ENCODE measurements at regions of chr3 and their contacts with region 1.

Region 1: GRCh38 chr3:11445883-11446282 is 173.7 kb downstream of the ATG7 start:
- DNase-seq: no peak
- H3K4me3 ChIP-seq: no peak overlapping the region
- H3K27ac ChIP-seq: no peak overlapping the region
- H3K4me1 ChIP-seq: no peaks in the 10 kb centered on the region
- H3K27me3 ChIP-seq: no peaks in the 10 kb centered on the region
- CTCF ChIP-seq: no peak
- POLR2A ChIP-seq: no peak

Region 2: DNA sequence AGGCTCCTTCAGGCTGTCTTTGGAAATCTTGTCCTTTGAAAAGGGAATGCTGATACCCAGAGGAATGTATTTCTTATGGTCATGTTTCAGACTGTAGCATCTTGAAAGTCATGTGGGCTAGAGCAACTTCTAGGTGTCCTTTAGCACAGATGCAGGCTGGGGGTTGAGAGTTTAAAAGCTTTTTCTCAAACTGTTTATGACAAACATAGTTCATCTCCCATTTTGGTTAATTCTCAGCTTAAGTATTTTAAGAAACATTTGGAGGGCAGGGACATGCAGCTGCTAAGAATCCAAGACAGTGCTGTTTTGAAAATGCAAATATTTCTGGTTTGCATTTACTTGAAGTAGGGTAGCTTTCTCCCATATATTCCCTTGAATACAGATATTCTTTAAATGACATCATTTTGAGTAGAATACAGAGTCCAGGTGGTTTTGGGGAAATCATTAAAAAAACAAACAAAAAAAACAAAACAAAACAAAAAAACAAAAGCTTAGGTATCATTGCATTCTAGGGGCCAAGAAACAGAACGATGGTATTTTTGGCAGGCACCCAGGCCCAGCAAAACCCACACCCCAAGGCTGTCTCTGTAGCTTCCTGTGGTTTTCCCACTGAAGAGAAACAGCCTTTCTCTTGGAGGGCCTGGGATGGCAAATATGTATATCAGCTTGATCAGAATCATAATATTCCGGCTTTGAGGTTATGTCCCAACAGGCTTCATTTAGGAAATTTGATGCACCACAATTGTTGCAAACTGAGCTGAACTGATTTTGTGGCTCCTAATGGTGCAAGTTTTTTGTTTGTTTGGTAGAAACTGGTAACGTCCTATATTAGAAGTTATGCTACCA is 53.6 kb before region 1 on chr3:
- intact Hi-C with region 1: loop called (anchors 10 kb)
- DNase-seq: no peak
- H3K4me3 ChIP-seq: no peak overlapping the region
- H3K27ac ChIP-seq: peak overlapping the region; percentile 23
- H3K4me1 ChIP-seq: peaks cover 18% of the 10 kb centered on the region
- H3K27me3 ChIP-seq: no peaks in the 10 kb centered on the region
- CTCF ChIP-seq: no peak
- POLR2A ChIP-seq: no peak

Measured in vagina (tissue), 2 donors.